H1 (cell line): ENCODE measurements at regions of chr10 and their contacts with region 1.

Region 1: DNA sequence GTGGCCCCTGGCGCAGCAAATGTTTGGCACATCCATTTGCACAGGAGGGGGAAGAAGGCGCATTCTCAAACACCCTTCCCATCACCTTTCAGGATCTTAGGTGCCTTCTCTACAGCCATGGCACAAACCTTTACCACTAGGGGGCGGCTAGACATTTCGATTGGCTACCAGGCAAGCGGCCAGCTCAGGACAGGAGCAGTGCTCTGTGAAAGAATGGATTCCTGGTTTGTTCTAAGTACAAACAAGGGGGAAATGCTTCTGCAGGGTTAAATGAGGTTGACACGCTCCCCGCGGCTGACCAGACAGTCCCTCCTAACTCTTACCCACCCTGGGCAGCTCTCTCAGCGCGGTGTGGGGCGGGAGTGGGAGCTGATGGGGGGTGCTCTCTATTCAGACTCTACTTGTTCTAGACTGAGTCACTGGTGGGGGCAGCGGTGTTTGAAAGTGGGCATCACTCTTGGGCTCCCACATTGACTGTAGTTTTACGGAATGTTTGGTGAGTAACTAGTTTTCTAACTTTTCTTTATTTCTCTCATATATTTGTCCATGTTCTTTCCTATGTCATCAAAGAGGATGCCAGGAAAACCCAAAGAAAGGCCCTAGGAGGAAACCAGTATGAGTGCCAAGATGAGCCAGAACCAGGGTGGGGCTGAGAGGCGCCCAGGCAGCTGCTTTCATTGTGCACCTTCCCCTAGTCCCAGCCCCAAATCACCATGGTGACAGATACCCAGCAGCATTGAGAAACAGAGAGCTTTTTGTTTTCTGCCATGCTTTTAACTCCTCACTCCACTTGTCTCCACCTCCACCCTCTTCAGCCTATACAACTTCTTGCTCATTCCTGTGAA is 61.4 kb upstream of the GPR158 start:
- DNase-seq: peak; percentile 43 to 80
- H3K4me3 ChIP-seq: no peak overlapping the region
- H3K27ac ChIP-seq: no peak overlapping the region
- H3K4me1 ChIP-seq: peaks cover 0 to 7% (median 0%) of the 10 kb centered on the region in 4 experiments; a peak in 4 of 7 replicates
- H3K27me3 ChIP-seq: no peaks in the 10 kb centered on the region; a peak in 1 of 7 replicates
- CTCF ChIP-seq: peak; percentile 62 to 90 (median 81)
- EP300 ChIP-seq: no peak
- POLR2A ChIP-seq: no peak
- RAD21 ChIP-seq: peak; percentile 85 to 86

Region 2: GRCh38 chr10:25101461-25102146 is 11.8 kb before region 1 on chr10:
- CTCF ChIA-PET with region 1: interaction called, 20 read pairs
- POLR2A ChIA-PET with region 1: no interaction called
- DNase-seq: no peak
- H3K4me3 ChIP-seq: no peak overlapping the region
- H3K27ac ChIP-seq: no peak overlapping the region
- H3K4me1 ChIP-seq: peaks cover 2 to 16% (median 5%) of the 10 kb centered on the region in 4 experiments; a peak in 4 of 7 replicates
- H3K27me3 ChIP-seq: peaks cover 0 to 2% (median 0%) of the 10 kb centered on the region in 4 experiments; a peak in 1 of 7 replicates
- CTCF ChIP-seq: no peak
- EP300 ChIP-seq: no peak
- POLR2A ChIP-seq: no peak
- RAD21 ChIP-seq: no peak

Region 3: DNA sequence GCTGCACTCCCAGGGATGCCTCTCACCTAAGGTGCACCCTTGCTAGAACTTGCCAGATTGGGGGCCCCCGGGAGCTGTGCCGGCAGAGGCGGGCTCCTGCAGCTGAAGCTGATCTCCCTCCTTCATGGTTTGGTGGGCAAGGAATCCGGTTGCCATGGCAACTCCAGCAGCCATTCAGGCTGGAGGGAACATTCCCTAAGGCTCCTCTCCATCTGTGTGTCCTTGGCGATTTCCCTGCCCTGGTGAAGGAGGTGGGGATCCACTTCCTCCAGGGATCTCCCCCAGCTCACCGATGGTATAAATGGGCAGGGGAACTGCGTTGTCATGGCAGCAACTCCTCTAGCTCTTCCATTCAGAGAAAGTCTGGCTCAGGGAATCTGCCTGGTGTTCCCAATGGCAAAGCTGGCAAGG is 11.8 kb after region 1 on chr10:
- CTCF ChIA-PET with region 1: interaction called, 15 read pairs
- POLR2A ChIA-PET with region 1: no interaction called
- DNase-seq: peak in 1 of 2 experiments; percentile 54
- H3K4me3 ChIP-seq: no peak overlapping the region
- H3K27ac ChIP-seq: no peak overlapping the region
- H3K4me1 ChIP-seq: no peaks in the 10 kb centered on the region
- H3K27me3 ChIP-seq: no peaks in the 10 kb centered on the region; a peak in 1 of 7 replicates
- CTCF ChIP-seq: no peak
- EP300 ChIP-seq: no peak
- POLR2A ChIP-seq: no peak
- RAD21 ChIP-seq: no peak

Region 4: GRCh38 chr10:25174461-25175230 is 61.2 kb after region 1 on chr10 and contains the start of gene GPR158:
- CTCF ChIA-PET with region 1: interaction called, 16 read pairs
- POLR2A ChIA-PET with region 1: no interaction called
- DNase-seq: peak; percentile 83 to 95
- H3K4me3 ChIP-seq: peak within 1 kb of the TSS; percentile 63 to 93 (median 74)
- H3K27ac ChIP-seq: no peak within 1 kb of the TSS
- H3K4me1 ChIP-seq: peaks cover 0 to 8% (median 5%) of the 10 kb centered on the region in 4 experiments; a peak in 6 of 7 replicates
- H3K27me3 ChIP-seq: peaks cover 7 to 28% (median 27%) of the 10 kb centered on the region in 4 experiments; a peak in 6 of 7 replicates
- CTCF ChIP-seq: no peak
- EP300 ChIP-seq: 0 out of 3 replicates have a peak, but pooled peaks of 1 of the 2 experiments have one; percentile 36
- POLR2A ChIP-seq: 0 out of 3 replicates have a peak, but pooled peaks of 1 of the 2 experiments have one; percentile 27
- RAD21 ChIP-seq: no peak; a peak in 1 of 4 replicates
- total RNA-seq, gene GPR158: 0.78 and 0.86 TPM in 2 replicates

Region 5: GRCh38 chr10:25226775-25227682 is 113.6 kb after region 1 on chr10:
- CTCF ChIA-PET with region 1: interaction called, 17 read pairs
- POLR2A ChIA-PET with region 1: no interaction called
- DNase-seq: peak in 1 of 2 experiments; percentile 17
- H3K4me3 ChIP-seq: no peak overlapping the region
- H3K27ac ChIP-seq: no peak overlapping the region
- H3K4me1 ChIP-seq: no peaks in the 10 kb centered on the region
- H3K27me3 ChIP-seq: peaks cover 0 to 1% (median 0%) of the 10 kb centered on the region in 4 experiments; a peak in 1 of 7 replicates
- CTCF ChIP-seq: peak; percentile 42 to 76 (median 70)
- EP300 ChIP-seq: no peak
- POLR2A ChIP-seq: no peak
- RAD21 ChIP-seq: peak; percentile 89 to 93

Region 6: DNA sequence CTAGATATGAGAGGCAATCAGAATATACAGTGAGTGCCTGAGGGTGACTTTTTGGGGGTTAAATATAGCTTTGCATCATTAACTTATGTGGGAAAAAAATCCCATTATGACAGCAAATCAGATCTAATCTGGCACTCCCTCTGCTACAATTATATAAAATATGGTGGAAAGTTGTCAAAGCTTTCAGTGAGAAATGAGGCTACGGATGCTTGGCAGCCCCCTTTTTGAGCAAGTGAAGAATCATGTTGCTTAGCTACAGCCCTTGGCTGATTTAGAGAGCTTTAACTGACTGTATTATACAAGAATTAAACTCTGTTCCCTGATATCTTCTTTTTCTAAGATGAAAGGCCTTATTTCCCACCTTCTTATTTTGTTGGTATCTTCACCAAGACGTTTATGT is 118.8 kb after region 1 on chr10:
- CTCF ChIA-PET with region 1: interaction called, 17 read pairs
- POLR2A ChIA-PET with region 1: no interaction called
- DNase-seq: no peak
- H3K4me3 ChIP-seq: no peak overlapping the region
- H3K27ac ChIP-seq: no peak overlapping the region
- H3K4me1 ChIP-seq: no peaks in the 10 kb centered on the region
- H3K27me3 ChIP-seq: no peaks in the 10 kb centered on the region
- CTCF ChIP-seq: no peak
- EP300 ChIP-seq: no peak
- POLR2A ChIP-seq: no peak
- RAD21 ChIP-seq: no peak